BJ (cell line): ENCODE measurements at regions of chr18 and their contacts with region 1.

Region 1: DNA sequence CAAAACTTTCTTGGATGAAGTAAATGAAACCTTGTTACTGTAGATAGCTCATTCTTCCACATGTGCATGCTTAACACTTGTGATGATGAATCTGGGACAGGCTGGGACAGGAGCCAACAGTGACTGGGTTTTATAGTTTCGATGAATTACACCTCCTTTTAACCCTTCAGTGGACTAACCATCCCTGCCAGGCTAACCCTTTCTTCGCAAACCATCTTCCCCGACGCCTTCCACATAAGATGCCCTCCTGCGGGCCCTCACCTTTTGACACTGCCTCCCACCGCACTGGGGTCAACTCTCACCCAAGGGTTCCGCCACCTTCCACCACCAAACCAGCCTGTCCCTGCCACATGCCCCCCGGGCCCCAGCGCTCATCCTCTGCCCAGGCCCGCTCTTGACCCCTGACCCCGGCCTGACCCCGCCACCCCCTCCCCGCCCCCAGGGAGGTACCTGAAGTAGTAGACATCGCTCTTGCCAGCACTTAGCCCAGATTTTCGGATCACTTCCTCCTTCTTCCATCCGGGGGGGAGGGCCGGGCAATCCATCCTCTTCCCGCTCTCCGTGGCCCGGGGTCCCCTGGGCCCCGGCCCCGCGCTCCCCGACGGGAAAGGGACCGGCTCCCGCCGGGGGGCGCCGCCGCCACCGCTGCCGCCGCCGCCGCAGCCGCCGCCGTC is 764 bp downstream of the MBD2 start:
- DNase-seq: peak; percentile 70
- H3K4me3 ChIP-seq: peak overlapping the region; percentile 92
- H3K27me3 ChIP-seq: no peaks in the 10 kb centered on the region
- CTCF ChIP-seq: no peak

Region 2: DNA sequence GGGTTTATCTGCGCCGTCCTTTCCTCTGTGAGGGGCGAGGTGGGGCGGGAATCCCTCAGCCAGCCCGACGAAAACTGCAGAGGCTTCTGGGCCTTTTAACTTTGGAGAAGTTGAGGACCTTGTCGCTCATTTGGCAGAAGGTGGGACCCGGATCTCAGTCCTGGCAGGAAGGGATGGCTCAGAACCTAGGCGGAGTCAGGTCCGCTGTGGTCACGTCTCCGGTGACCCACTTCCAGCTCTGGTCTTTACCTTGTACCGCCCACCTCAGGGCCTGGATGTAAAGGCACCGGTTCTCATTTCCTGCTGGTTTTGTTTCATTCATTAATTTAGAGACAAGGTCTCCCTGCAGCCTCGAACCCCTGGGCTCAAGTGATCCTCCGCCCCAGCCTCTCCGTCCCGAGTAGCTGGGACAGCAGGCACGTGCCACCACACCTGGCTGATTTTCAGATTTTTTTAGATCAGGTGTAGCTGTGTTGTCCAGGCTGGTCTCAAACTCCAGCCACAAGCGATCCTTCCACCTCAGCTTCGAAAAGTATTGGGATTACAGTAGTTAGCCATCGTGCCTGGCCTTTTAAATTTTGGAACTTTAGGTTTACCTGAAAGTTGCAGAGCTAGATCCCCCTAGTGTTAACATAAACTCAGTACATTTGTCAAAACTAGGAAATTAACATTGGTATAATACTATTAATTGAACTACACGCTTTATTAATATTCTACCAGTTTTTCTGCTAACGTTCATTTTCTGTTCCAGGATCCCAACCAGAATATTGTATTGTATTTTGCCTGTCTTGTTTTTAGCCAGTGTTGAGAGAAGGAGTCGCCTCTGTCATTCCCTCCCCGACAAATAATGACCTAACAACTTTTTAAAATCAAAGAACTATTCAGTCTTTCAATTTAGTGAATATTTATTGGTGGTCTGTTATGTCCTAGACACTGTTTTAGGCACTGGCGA is 46.5 kb after region 1 on chr18:
- CTCF ChIA-PET with region 1: interaction called, 17 read pairs
- POLR2A ChIA-PET with region 1: interaction called, 3 read pairs
- DNase-seq: no peak
- H3K4me3 ChIP-seq: peak overlapping the region; percentile 83
- H3K27me3 ChIP-seq: no peaks in the 10 kb centered on the region
- CTCF ChIP-seq: peak; percentile 56